Spleen (tissue), 13 donors: ENCODE measurements at regions of chr21 and their contacts with region 1.

Region 1: DNA sequence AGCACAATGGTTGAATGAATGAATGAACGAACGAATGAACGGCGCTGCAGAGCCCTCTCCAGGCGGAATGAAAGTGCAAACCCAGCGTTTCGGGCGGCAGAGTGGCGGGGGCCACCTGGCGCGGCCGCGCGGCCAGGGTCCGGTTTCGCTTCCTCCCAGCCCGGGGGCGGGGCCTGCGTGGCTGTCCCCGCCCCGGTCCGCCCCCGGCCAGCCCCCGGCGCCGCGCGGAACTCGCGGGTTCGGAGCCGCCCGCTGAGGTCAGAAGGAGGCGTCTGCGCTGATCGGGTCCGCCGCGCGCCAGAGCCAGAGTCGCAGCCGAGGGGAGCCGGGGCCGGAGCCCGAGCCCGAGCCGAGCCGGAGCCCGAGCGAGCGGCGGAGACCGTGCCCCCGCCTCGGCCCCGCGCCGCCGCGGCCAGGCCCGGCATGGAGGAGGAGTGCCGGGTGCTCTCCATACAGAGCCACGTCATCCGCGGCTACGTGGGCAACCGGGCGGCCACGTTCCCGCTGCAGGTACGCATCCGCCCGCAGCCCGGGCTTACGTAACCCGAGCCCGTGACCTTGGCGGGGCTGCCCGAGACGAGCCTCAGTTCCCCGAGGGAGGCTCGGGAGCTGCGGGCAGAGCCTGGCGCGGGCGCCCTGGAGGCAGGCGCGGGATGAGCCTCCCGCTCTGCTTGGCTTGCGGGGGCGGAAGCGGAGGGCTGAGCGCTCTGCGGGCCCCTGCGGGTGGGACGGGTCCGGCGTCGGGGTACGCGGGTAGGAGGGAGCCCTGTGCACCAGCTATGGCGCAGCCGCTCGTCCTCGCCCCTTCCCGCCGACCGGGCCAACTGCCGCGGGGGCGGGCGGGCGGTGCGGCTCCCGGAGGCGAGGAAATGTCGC is at the start of gene PDXK:
- DNase-seq: peak; percentile 98
- H3K4me3 ChIP-seq: peak within 1 kb of the TSS; percentile 68 to 92 (median 88)
- H3K27ac ChIP-seq: peak within 1 kb of the TSS; percentile 86 to 97 (median 90)
- H3K4me1 ChIP-seq: peaks cover 19 to 73% (median 50%) of the 10 kb centered on the region in 6 donors
- H3K27me3 ChIP-seq: peaks cover 0 to 6% (median 0%) of the 10 kb centered on the region in 7 donors
- CTCF ChIP-seq: peak in 2 of 11 experiments; percentile 19 to 25
- POLR2A ChIP-seq: peak in 1 of 3 donors; percentile 66
- total RNA-seq, gene PDXK: 41.1 to 82.9 (median 58.7) TPM

Region 2: GRCh38 chr21:43295066-43295958 is 423.8 kb before region 1 on chr21:
- intact Hi-C with region 1: no loop called
- DNase-seq: peak; percentile 54
- H3K4me3 ChIP-seq: no peak overlapping the region
- H3K27ac ChIP-seq: no peak overlapping the region
- H3K4me1 ChIP-seq: peaks cover 0 to 9% (median 8%) of the 10 kb centered on the region in 6 donors
- H3K27me3 ChIP-seq: peaks cover 0 to 28% (median 0%) of the 10 kb centered on the region in 7 donors
- CTCF ChIP-seq: no peak
- POLR2A ChIP-seq: no peak

Region 3: DNA sequence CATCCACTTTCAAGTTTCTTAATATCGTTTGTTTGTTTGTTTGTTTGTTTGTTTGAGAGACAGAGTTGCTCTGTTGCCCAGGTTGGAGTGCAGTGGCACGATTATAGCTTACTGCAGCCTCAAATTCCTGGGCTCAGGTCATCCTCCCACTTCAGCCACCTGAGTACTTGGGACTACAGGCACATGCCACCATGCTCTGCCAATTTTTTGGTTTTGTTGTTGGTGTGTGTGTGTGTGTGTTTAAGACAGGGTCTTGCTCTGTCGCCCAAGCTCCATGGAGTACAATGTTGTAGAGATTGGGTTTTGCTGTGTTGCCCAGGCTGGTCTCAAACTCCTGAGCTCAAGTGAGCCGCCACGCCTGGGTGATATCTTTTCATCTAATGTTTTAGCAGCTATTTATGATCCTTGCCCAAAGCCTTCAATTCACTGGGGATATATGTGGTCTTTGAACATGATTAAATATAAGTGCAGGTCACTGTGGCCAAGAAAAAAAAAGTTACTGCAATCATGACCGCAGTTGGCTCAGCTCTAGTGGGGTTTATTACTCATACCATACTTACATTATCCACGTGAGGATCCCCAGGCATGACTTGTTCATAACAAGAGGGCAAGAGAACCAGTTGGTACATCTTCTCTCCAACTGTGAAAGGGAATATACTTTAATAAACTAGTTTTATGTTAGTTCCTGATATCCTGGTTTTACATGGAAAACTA is 51.8 kb before region 1 on chr21:
- intact Hi-C with region 1: loop called (anchors 5 kb)
- DNase-seq: no peak
- H3K4me3 ChIP-seq: no peak overlapping the region
- H3K27ac ChIP-seq: no peak overlapping the region
- H3K4me1 ChIP-seq: peaks cover 0 to 46% (median 13%) of the 10 kb centered on the region in 6 donors
- H3K27me3 ChIP-seq: no peaks in the 10 kb centered on the region
- CTCF ChIP-seq: no peak
- POLR2A ChIP-seq: no peak

Region 4: DNA sequence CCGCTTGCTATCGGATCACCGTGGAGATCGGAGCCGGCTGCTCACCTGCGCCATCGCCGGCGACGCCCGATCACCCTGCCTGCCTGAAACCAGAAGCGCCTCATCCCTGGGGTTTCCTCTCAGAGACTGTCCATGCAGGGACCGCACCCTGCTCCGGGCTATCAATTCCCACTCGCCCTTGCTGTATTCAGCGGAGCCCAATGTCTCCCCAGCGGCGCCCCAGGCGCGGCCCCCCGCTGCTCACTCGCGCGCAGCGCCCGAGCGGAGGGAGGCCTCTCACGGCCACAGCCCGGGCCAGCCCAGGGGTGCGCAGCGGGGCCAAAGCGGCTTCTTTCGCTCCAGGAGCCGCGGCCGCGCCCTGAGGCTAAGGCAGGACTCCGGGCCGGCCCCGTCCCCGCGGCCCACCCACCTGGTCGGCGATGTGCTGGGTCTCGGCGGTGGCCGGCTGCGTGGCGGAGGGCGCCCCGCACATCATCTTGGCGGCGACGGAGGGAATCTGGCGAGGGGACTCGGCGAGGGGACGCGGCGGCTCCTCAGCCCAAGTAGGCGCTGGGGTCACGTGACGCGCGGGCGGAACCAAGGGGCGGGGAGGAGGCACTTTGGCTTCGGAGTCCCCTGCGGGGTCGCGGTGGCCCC is 56.8 kb after region 1 on chr21 and contains the start of gene CSTB:
- intact Hi-C with region 1: no loop called
- DNase-seq: peak; percentile 96
- H3K4me3 ChIP-seq: peak within 1 kb of the TSS; percentile 81 to 99 (median 91)
- H3K27ac ChIP-seq: peak within 1 kb of the TSS; percentile 89 to 96 (median 92)
- H3K4me1 ChIP-seq: peaks cover 13 to 78% (median 25%) of the 10 kb centered on the region in 6 donors
- H3K27me3 ChIP-seq: no peaks in the 10 kb centered on the region
- CTCF ChIP-seq: peak in 1 of 11 experiments; percentile 11
- POLR2A ChIP-seq: peak in 1 of 3 donors; percentile 66
- total RNA-seq, gene CSTB: 10.5 to 36.6 (median 28.6) TPM

Region 5: GRCh38 chr21:44024887-44025362 is 305.8 kb after region 1 on chr21:
- intact Hi-C with region 1: no loop called
- DNase-seq: no peak
- H3K4me3 ChIP-seq: peak overlapping the region in 1 of 8 donors; percentile 6
- H3K27ac ChIP-seq: peak overlapping the region in 7 of 8 donors; percentile 5 to 65 (median 54)
- H3K4me1 ChIP-seq: peaks cover 23 to 99% (median 73%) of the 10 kb centered on the region in 6 donors
- H3K27me3 ChIP-seq: no peaks in the 10 kb centered on the region
- CTCF ChIP-seq: peak in 2 of 11 experiments; percentile 11 to 13
- POLR2A ChIP-seq: no peak

Region 6: GRCh38 chr21:45000977-45001728 is 1282.0 kb after region 1 on chr21:
- intact Hi-C with region 1: no loop called
- DNase-seq: peak; percentile 73
- H3K4me3 ChIP-seq: no peak overlapping the region
- H3K27ac ChIP-seq: peak overlapping the region in 5 of 8 donors; percentile 17 to 56 (median 51)
- H3K4me1 ChIP-seq: peaks cover 0 to 64% (median 35%) of the 10 kb centered on the region in 6 donors
- H3K27me3 ChIP-seq: peaks cover 0 to 46% (median 0%) of the 10 kb centered on the region in 7 donors
- CTCF ChIP-seq: no peak
- POLR2A ChIP-seq: no peak